Endothelial cell of umbilical vein (primary cell): ENCODE measurements at regions of chr1 and their contacts with region 1.

Region 1: DNA sequence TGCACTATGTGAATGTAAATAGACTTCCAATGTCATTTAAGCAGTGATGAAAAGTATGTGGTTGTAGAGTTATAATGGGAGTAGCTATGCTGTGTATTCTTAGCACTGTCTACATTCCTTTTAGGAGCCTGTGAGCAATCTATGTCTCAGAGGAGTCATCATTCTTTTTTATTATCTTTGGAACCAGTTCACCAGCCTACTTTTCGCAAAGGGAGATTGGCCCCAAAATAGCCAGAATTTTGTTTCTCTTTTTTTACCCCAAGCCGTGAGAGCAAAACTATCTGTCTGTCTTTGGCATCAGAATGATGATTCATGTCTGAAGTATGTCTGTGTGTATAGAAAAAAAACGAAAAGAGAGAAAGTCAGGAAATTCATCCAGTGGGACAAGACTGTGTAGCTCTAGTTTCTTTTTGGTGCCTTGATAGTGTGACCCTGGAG is 44.2 kb downstream of the OSBPL9 start:
- DNase-seq: peak; percentile 93
- H3K4me3 ChIP-seq: no peak overlapping the region
- H3K27ac ChIP-seq: peak overlapping the region; percentile 82
- H3K4me1 ChIP-seq: peaks cover 32% of the 10 kb centered on the region
- H3K27me3 ChIP-seq: no peaks in the 10 kb centered on the region
- CTCF ChIP-seq: no peak
- POLR2A ChIP-seq: no peak

Region 2: DNA sequence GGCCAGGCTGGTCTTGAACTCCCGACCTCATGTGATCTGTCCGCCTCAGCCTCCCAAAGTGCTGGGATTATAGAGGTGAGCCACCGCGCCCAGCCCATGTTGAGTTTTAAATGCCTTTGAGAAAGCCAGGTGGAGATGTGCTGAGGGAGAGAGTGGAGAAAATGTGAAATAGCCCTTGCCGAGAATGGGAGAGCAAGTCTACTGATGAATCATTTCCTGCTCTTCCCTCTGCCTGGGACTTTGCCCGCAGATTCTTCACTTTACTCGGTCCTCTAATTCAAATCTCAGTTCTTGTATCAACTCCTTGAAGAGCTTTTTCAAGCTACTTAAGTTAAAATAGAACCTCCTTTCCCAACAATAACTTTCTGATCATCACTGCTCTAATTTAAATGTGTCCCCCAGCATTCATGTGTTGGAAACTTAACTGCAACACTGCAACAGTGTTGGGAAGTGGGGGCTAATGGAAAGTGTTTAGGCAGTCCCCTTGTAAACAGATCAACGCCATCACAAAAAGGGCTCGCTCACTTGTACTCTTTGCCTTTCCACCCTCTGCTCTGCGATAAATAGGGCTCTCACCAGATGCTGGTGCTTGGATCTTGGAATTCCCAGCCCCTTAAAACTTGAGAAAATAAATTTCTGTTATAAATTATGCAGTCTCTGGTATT is 16.4 kb before region 1 on chr1:
- CTCF ChIA-PET with region 1: interaction called, 5 read pairs
- POLR2A ChIA-PET with region 1: no interaction called
- dilution Hi-C with region 1: no loop called
- intact Hi-C with region 1: loop called (anchors 2 kb)
- DNase-seq: peak; percentile 77
- H3K4me3 ChIP-seq: no peak overlapping the region
- H3K27ac ChIP-seq: no peak overlapping the region
- H3K4me1 ChIP-seq: peaks cover 8% of the 10 kb centered on the region
- H3K27me3 ChIP-seq: no peaks in the 10 kb centered on the region
- CTCF ChIP-seq: no peak
- POLR2A ChIP-seq: no peak

Region 3: GRCh38 chr1:51671527-51672325 is 10.6 kb after region 1 on chr1:
- CTCF ChIA-PET with region 1: interaction called, 14 read pairs
- POLR2A ChIA-PET with region 1: no interaction called
- dilution Hi-C with region 1: no loop called
- intact Hi-C with region 1: loop called (anchors 1 kb)
- DNase-seq: peak; percentile 95
- H3K4me3 ChIP-seq: peak overlapping the region in 1 of 3 experiments; percentile 40
- H3K27ac ChIP-seq: peak overlapping the region; percentile 75
- H3K4me1 ChIP-seq: peaks cover 54% of the 10 kb centered on the region
- H3K27me3 ChIP-seq: no peaks in the 10 kb centered on the region
- CTCF ChIP-seq: no peak
- POLR2A ChIP-seq: no peak

Region 4: GRCh38 chr1:51729156-51729823 is 68.2 kb after region 1 on chr1:
- CTCF ChIA-PET with region 1: interaction called, 3 read pairs
- POLR2A ChIA-PET with region 1: no interaction called
- dilution Hi-C with region 1: no loop called
- intact Hi-C with region 1: loop called (anchors 1 kb)
- DNase-seq: peak; percentile 92
- H3K4me3 ChIP-seq: peak overlapping the region; percentile 89 to 97 (median 94)
- H3K27ac ChIP-seq: peak overlapping the region; percentile 66
- H3K4me1 ChIP-seq: peaks cover 16% of the 10 kb centered on the region
- H3K27me3 ChIP-seq: no peaks in the 10 kb centered on the region
- CTCF ChIP-seq: no peak
- POLR2A ChIP-seq: no peak